H1 (cell line): ENCODE measurements at regions of chr5 and their contacts with region 1.

Region 1: DNA sequence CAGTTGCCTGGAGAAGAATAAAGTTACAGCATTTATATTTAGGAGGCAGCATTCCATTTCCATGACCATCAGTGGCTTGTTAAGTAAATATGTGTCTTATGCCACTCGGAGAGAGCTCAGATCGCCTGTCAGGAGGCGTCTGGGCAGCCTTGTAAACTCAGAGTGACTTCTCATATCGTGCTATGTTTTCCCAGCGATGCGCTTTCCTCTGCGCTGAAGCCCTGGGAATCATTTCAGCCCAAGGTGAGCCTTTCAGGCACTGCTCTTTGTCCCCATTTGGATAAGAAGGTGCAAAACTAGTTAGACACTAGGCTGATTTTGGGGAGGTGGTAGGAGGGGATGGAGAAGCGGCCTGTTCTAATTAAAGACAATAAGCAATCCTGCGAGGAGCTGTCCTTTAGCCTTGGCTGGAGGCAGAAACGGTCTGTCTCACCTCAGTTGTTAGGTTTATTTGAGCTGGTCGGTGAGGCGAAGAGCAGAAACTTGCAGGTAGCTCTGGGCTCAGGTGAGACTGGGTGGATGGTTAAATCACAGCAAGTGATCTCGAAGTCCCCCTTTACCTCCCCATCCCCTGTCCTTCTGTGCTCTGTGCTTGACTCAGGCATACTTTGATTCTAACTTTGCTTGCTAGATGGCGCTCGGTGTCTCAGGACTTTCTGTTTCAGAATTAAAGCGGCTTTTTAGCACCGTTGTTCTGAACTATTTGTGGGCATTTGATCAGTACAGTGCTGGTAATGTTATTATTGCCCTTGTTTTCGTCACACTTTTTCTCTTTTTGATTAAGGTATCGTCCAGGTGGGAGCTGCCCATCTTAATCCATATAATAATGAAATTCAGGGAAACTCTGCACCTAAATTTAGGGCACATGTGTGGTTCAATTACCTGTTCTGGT is 24.6 kb downstream of the NR2F1 start:
- DNase-seq: peak in 1 of 2 experiments; percentile 76
- H3K4me3 ChIP-seq: peak overlapping the region in 1 of 4 experiments; percentile 37; a peak in 3 of 8 replicates
- H3K27ac ChIP-seq: no peak overlapping the region
- H3K4me1 ChIP-seq: peaks cover 5 to 15% (median 11%) of the 10 kb centered on the region in 4 experiments; a peak in 6 of 7 replicates
- H3K27me3 ChIP-seq: peaks cover 78 to 98% (median 89%) of the 10 kb centered on the region in 4 experiments
- CTCF ChIP-seq: peak; percentile 20 to 80 (median 63)
- EP300 ChIP-seq: peak in 1 of 2 experiments; percentile 24; a peak in 1 of 3 replicates
- POLR2A ChIP-seq: no peak
- RAD21 ChIP-seq: peak; percentile 70 to 81

Region 2: GRCh38 chr5:93378073-93378472 is 229.5 kb before region 1 on chr5:
- CTCF ChIA-PET with region 1: no interaction called
- POLR2A ChIA-PET with region 1: no interaction called
- DNase-seq: no peak
- H3K4me3 ChIP-seq: no peak overlapping the region
- H3K27ac ChIP-seq: no peak overlapping the region
- H3K4me1 ChIP-seq: peaks cover 0 to 3% (median 0%) of the 10 kb centered on the region in 4 experiments; a peak in 1 of 7 replicates
- H3K27me3 ChIP-seq: no peaks in the 10 kb centered on the region
- CTCF ChIP-seq: no peak
- EP300 ChIP-seq: no peak
- POLR2A ChIP-seq: no peak
- RAD21 ChIP-seq: no peak

Region 3: GRCh38 chr5:93582677-93583438 is 24.8 kb before region 1 on chr5 and contains the start of gene NR2F1:
- CTCF ChIA-PET with region 1: interaction called, 17 read pairs
- POLR2A ChIA-PET with region 1: interaction called, 10 read pairs
- DNase-seq: peak; percentile 61 to 78
- H3K4me3 ChIP-seq: peak within 1 kb of the TSS; percentile 11 to 61 (median 24); a peak in 6 of 8 replicates
- H3K27ac ChIP-seq: no peak within 1 kb of the TSS
- H3K4me1 ChIP-seq: peaks cover 0 to 33% (median 23%) of the 10 kb centered on the region in 4 experiments; a peak in 5 of 7 replicates
- H3K27me3 ChIP-seq: peaks cover 70 to 97% (median 84%) of the 10 kb centered on the region in 4 experiments
- CTCF ChIP-seq: no peak
- EP300 ChIP-seq: no peak
- POLR2A ChIP-seq: no peak
- RAD21 ChIP-seq: no peak
- total RNA-seq, gene NR2F1: not detected in 2 replicates

Region 4: DNA sequence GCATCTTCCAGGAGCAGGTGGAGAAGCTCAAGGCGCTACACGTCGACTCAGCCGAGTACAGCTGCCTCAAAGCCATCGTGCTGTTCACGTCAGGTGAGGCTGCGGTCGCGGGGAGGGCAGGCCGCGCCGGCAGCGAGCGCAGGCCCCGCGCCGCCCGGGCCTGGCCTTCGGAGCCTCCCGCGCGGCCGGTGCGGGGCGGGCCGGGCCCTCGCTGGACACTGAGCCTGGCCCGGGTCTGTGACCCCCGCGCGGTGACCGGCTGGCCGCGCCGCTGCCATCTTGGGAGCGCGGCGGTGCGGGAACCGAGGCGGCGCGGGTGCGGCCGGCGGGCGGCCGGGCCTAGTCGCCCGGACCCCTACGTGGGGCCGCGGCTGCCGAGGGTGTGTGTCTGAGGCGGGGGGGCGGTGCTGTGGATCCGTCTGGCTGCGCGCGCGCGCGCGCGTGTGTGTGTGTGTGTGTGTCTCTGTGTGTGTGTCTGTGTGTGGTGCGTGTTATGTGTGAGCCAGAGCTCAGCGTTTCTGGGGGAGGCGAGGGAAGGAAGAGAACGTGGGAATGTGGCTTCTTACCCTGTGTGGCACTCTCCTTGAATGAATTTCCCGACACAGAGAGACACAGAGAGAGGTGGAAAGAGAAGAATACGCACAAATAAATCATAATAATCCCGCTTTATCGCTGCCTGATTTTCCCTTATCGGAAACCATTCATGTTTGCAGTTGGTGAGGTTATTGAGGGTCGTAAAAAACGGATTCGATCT is 19.1 kb before region 1 on chr5:
- CTCF ChIA-PET with region 1: interaction called, 15 read pairs
- POLR2A ChIA-PET with region 1: interaction called, 10 read pairs
- DNase-seq: no peak
- H3K4me3 ChIP-seq: peak overlapping the region in 2 of 4 experiments; percentile 8 to 18; a peak in 2 of 8 replicates
- H3K27ac ChIP-seq: no peak overlapping the region
- H3K4me1 ChIP-seq: peaks cover 0 to 19% (median 13%) of the 10 kb centered on the region in 4 experiments; a peak in 5 of 7 replicates
- H3K27me3 ChIP-seq: peaks cover 87 to 99% (median 93%) of the 10 kb centered on the region in 4 experiments
- CTCF ChIP-seq: no peak
- EP300 ChIP-seq: no peak
- POLR2A ChIP-seq: no peak
- RAD21 ChIP-seq: no peak

Region 5: GRCh38 chr5:93596676-93597461 is 10.7 kb before region 1 on chr5:
- CTCF ChIA-PET with region 1: interaction called, 32 read pairs
- POLR2A ChIA-PET with region 1: interaction called, 6 read pairs
- DNase-seq: no peak
- H3K4me3 ChIP-seq: peak overlapping the region in 3 of 4 experiments; percentile 13 to 47 (median 15); a peak in 5 of 8 replicates
- H3K27ac ChIP-seq: no peak overlapping the region
- H3K4me1 ChIP-seq: peaks cover 5 to 28% (median 18%) of the 10 kb centered on the region in 4 experiments
- H3K27me3 ChIP-seq: peaks cover 94 to 100% (median 97%) of the 10 kb centered on the region in 4 experiments
- CTCF ChIP-seq: peak; percentile 31 to 49 (median 42)
- EP300 ChIP-seq: no peak
- POLR2A ChIP-seq: no peak
- RAD21 ChIP-seq: peak; percentile 61 to 69

Region 6: GRCh38 chr5:93620487-93621326 is 13.1 kb after region 1 on chr5:
- CTCF ChIA-PET with region 1: interaction called, 12 read pairs
- POLR2A ChIA-PET with region 1: interaction called, 6 read pairs
- DNase-seq: peak in 1 of 2 experiments; percentile 72
- H3K4me3 ChIP-seq: peak overlapping the region; percentile 60 to 82 (median 64)
- H3K27ac ChIP-seq: no peak overlapping the region
- H3K4me1 ChIP-seq: peaks cover 0 to 5% (median 2%) of the 10 kb centered on the region in 4 experiments; a peak in 3 of 7 replicates
- H3K27me3 ChIP-seq: peaks cover 30 to 69% (median 49%) of the 10 kb centered on the region in 4 experiments
- CTCF ChIP-seq: no peak
- EP300 ChIP-seq: peak in 1 of 2 experiments; percentile 29; a peak in 1 of 3 replicates
- POLR2A ChIP-seq: no peak
- RAD21 ChIP-seq: peak; percentile 39 to 50; a peak in 3 of 4 replicates

Region 7: GRCh38 chr5:93794954-93795353 is 187.3 kb after region 1 on chr5:
- CTCF ChIA-PET with region 1: interaction called, 28 read pairs
- POLR2A ChIA-PET with region 1: no interaction called
- DNase-seq: no peak
- H3K4me3 ChIP-seq: no peak overlapping the region
- H3K27ac ChIP-seq: no peak overlapping the region
- H3K4me1 ChIP-seq: no peaks in the 10 kb centered on the region; a peak in 1 of 7 replicates
- H3K27me3 ChIP-seq: 0 out of 7 replicates have a peak, but pooled peaks cover 0 to 2% (median 0%) of the 10 kb centered on the region in 4 experiments
- CTCF ChIP-seq: no peak
- EP300 ChIP-seq: no peak
- POLR2A ChIP-seq: no peak
- RAD21 ChIP-seq: no peak